Calu3 (cell line): ENCODE measurements at regions of chr11 and their contacts with region 1.

Region 1: DNA sequence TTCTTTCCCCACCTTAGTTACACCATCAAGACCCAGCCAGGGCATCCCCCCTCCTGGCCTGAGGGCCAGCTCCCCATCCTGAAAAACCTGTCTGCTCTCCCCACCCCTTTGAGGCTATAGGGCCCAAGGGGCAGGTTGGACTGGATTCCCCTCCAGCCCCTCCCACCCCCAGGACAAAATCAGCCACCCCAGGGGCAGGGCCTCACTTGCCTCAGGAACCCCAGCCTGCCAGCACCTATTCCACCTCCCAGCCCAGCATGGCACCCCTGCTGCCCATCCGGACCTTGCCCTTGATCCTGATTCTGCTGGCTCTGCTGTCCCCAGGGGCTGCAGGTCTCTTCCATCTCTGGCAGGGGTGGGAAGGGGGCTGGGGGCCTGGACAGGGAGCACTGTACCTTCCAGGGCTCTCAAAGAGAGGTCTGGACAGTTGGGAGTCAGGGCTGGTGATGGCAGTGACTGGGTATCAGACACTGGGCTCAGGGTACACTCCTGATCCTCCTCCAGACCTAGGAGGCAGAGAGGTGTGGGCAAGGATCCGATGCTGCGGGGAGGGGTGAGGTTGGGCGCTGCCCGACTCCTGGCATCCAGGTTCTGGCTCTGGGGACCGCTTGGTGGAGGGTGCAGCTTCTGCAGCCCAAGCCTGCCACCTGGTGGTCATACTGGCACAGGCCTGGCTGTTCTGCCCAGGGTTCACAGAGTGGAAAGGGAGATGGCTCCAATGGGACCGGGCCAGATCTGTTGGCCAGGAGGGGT is at the start of gene UPK2:
- DNase-seq: peak; percentile 90
- H3K4me3 Mint-ChIP-seq: no peak within 1 kb of the TSS
- H3K27ac Mint-ChIP-seq: no peak within 1 kb of the TSS
- H3K4me1 Mint-ChIP-seq: peaks cover 10% of the 10 kb centered on the region
- H3K27me3 Mint-ChIP-seq: peaks cover 29% of the 10 kb centered on the region
- CTCF ChIP-seq: peak; percentile 81
- total RNA-seq, gene UPK2: 3.5 and 5.2 TPM in 2 replicates

Region 2: DNA sequence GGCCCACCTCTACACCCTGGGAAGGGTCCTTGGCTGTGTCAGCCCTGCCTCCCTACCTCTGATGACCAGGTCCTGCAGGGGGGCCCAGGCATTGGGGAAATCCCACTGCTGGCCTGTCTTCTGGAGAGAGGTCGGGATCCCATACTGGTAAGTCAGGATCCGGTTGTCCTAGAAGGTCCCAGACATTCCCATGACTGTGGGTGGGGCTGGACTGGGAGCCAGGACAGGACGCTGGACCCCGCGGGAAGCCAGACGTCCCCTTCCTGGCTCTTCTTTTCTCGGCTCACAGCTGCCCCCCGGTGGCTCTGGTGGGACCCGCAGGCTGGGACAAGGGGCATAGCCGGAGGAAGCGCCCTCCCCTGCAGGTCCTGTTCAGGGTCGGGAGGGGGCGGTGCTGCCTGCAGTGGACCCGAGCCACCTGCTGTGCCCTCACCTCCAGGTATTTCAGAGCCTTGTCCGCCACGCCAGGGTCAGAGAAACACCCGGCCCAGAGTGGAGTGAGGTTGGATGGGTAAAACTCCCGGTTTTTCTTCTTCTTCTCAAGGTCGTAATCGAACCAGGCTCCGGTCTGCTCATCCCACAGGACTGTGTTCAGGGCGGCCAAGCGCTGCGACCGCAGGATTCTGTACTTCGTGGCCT is 296.8 kb before region 1 on chr11:
- CTCF ChIA-PET with region 1: no interaction called
- intact Hi-C with region 1: no loop called
- DNase-seq: peak; percentile 93
- H3K4me3 Mint-ChIP-seq: no peak overlapping the region
- H3K27ac Mint-ChIP-seq: no peak overlapping the region
- H3K4me1 Mint-ChIP-seq: no peaks in the 10 kb centered on the region
- H3K27me3 Mint-ChIP-seq: no peaks in the 10 kb centered on the region
- CTCF ChIP-seq: peak; percentile 80

Region 3: DNA sequence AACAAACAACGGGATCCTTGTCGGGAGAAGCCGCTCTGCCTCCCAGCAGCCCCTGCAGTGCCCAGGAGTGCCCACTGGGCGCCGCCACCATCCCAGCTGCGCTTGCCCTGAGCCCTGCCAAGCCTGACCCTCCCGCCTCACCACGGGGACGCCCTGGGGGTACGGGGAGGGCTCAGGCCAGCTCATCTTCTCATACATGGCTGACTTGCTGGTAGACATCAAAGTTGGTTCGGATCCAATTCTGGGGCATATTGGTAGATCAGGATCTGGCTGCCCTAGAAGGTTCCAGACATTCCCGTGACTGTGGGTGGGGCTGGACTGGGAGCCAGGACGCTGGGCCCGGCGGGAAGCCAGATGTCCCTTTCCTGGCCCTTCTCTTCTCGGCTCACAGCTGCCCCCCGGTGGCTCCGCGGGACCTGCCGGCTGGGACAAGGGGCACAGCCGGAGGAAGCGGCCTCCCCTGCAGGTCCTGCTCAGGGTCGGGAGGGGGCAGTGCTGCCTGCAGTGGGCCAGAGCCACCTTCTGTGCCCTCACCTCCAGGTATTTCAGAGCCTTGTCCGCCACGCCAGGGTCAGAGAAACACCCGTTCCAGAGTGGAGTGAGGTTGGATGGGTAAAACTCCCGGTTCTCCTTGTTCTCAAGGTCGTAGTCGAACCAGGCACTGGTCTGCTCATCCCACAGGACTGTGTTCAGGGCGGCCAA is 266.3 kb before region 1 on chr11:
- CTCF ChIA-PET with region 1: interaction called, 4 read pairs
- intact Hi-C with region 1: loop called (anchors 10 kb)
- DNase-seq: peak; percentile 96
- H3K4me3 Mint-ChIP-seq: peak overlapping the region; percentile 58
- H3K27ac Mint-ChIP-seq: no peak overlapping the region
- H3K4me1 Mint-ChIP-seq: no peaks in the 10 kb centered on the region
- H3K27me3 Mint-ChIP-seq: no peaks in the 10 kb centered on the region
- CTCF ChIP-seq: peak; percentile 89

Region 4: GRCh38 chr11:118907051-118908042 is 48.9 kb before region 1 on chr11:
- CTCF ChIA-PET with region 1: no interaction called
- intact Hi-C with region 1: loop called (anchors 1 kb)
- DNase-seq: peak; percentile 88
- H3K4me3 Mint-ChIP-seq: peak overlapping the region; percentile 50
- H3K27ac Mint-ChIP-seq: peak overlapping the region; percentile 74
- H3K4me1 Mint-ChIP-seq: peaks cover 29% of the 10 kb centered on the region
- H3K27me3 Mint-ChIP-seq: no peaks in the 10 kb centered on the region
- CTCF ChIP-seq: peak; percentile 81

Region 5: DNA sequence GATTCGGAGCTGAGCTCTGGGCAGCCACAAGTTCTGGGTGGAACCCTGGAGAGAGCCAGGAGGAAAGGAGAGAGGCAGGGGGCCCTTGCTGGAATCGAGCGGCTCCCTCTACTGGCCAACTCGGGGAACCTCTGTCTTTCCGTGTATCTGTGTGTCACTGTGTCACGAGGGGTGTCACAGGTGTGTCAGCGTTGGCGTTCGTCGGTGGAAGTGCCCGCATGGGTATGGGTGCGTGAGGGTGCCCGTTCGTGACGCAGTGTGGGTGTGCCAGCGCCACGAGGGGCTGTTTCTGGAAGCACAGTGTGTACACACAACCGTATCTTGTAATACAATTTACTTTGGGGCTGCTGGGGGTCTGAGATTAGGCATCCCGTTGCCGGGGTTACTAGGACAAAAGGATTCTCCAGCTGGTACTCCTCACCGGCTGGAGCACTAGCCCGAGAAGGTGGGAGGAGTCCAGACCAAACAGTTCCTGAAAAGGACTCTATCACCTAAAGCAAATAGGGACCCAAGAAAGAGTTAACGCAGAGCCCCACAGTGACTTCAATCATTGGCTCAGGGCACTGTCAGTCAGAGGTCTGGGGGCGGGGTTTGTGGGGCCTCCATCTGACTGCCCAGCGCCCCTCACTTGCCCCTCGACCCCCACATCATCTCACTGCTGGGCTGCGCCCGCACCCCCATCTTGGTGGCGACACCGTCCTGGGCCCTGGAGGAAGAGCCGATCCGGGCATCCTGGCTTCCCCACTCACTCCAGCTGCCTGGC is 28.0 kb before region 1 on chr11:
- CTCF ChIA-PET with region 1: no interaction called
- intact Hi-C with region 1: loop called (anchors 2 kb)
- DNase-seq: peak; percentile 87
- H3K4me3 Mint-ChIP-seq: peak overlapping the region; percentile 83
- H3K27ac Mint-ChIP-seq: peak overlapping the region; percentile 90
- H3K4me1 Mint-ChIP-seq: peaks cover 46% of the 10 kb centered on the region
- H3K27me3 Mint-ChIP-seq: no peaks in the 10 kb centered on the region
- CTCF ChIP-seq: peak; percentile 73